ENCODE measurements at regions of chr10 and their contacts with region 1.

Region 1: DNA sequence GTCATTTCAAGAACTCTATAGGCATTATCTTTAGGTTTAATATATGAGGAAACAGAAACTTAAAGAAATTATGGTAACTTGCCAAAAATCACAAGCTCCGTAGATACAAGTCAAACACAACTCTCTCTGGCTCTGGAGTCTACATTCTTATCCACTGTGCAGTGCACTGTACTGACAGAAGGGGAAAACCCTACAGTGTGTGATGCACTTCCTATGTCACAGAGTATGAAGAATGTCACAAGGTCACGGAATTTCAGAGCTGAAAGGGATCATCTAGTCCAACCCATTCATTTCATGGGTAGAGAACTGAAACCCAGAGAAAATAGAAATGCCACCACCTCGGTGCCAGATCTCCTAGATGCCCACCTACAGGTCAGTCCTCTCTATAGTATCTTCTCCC is 86.1 kb downstream of the LRRTM3 start:
- DNase-seq: no peak

Region 2: DNA sequence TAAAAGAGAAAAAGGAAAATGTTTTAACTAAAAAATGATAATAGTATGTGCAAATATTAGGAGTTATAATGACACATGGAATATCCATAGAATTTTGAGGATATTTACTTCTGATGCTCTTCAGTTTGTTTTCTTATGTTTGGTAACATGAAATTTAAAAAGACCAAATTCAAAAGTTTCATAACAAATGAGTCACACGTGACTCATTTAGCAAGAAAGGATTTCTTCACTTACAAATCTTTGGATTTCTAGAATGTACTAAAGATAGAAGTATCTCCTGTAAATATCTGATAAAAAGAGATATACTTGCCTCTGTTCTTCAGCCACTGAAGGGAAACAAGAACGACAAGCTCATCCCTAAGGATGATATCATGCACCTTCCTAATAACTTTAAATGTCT is 860.6 kb before region 1 on chr10:
- intact Hi-C with region 1: loop called in 1 of 2 experiments (anchors 5 kb)
- DNase-seq: no peak

Region 3: DNA sequence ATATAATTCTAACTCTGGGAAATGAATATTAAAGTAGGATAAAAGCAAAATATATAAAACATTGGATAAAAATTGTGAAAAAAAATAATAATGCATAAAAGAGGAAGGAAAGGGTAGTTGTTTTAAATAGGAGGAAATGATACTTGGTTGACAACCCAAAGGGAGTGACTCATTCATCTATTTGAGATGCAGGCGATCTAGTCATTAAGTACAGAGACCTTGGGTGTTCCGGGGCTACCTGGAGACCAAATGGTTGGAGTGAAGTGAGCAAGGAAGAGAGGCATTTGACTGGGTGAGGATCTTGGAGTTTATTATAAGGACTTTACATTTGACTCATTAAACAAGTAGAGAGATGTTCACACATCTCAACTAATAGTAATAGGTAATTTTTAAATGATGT is 24.8 kb after region 1 on chr10:
- intact Hi-C with region 1: no loop called
- DNase-seq: no peak